ENCODE measurements at regions of chr10 and their contacts with region 1.

Region 1: DNA sequence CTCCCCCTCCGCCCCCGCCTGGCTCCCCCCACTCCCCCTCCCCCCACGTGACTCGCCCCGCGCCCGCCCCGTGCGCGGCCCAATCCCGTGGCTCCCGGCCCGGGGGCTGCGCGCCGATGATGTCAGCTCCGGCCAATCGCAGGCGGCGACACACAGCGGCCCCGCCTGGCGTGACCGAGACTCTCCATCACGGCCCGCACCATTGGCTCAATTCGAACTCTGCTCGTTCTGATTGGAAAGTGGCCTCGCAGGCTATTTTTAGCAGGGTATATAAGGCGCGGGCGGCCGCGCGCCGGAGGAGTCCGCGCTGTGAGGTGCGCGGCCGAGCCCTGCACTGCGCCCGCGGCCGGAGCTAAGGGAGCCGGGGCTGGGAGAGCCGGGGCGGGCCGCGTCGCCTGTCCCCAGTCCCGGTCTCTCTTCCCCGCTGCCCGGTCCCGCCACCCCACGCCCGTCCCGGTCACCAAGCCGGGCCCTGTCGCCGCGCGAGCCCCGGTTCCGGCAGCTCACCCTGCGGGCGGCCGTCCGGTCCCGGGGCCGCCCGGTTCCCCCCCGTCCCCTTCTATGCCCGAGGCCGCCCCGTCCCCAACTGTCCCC is 345 bp upstream of the KLF6 start:
- DNase-seq: peak; percentile 85 to 98
- H3K4me3 ChIP-seq: peak overlapping the region; percentile 85
- H3K27ac ChIP-seq: peak overlapping the region; percentile 92
- H3K4me1 ChIP-seq: peaks cover 26% of the 10 kb centered on the region
- H3K27me3 ChIP-seq: no peaks in the 10 kb centered on the region
- CTCF ChIP-seq: no peak

Region 2: DNA sequence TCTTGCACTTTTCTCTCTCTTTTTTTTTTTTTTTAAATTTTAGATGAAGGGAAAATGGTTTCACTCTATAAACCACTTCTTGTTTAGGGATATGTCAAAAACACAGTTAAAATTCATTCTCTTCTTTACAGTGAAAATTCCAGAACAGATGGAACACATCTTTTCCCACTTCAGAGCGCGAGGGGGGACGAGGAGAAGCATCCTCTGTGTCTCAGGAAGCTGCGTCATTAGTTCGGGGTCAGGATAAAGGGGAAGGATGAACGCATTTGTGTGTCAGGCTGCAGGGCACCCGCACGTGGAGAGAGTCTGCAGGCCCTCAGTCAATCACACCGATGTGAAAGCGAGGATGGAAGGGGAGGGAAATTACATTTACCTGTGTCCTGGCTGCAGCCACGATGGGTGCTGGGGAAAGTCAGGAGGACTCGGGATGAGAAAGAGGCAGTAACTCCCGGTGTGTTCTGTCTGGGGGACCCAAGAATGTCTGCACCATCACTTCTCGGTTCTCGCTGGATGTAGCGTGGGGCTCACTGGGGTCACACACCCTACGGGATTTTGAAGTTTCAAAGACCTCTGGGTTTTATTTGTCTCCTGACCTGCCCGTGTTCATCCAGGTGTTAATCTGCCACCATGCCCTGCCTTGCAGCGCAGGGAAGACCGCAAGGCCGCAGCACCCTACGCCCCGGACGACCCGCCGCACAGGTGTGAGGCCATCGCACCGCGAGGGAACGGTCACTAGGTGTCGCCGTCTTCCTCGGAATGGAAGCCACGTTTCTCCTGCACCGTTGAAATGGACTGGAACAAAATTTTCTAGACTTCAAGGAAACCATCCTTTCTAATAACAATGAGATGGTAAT is 546.1 kb before region 1 on chr10:
- CTCF ChIA-PET with region 1: no interaction called
- POLR2A ChIA-PET with region 1: no interaction called
- intact Hi-C with region 1: loop called (anchors 2 kb)
- DNase-seq: peak in 1 of 2 experiments; percentile 79
- H3K4me3 ChIP-seq: no peak overlapping the region
- H3K27ac ChIP-seq: no peak overlapping the region
- H3K4me1 ChIP-seq: no peaks in the 10 kb centered on the region
- H3K27me3 ChIP-seq: no peaks in the 10 kb centered on the region
- CTCF ChIP-seq: peak; percentile 67

Region 3: GRCh38 chr10:3623746-3624145 is 161.6 kb before region 1 on chr10:
- CTCF ChIA-PET with region 1: no interaction called
- POLR2A ChIA-PET with region 1: no interaction called
- intact Hi-C with region 1: loop called (anchors 1 kb)
- DNase-seq: peak; percentile 55 to 92
- H3K4me3 ChIP-seq: peak overlapping the region; percentile 49; the same call in 1 of the 2 replicates
- H3K27ac ChIP-seq: peak overlapping the region; percentile 100
- H3K4me1 ChIP-seq: peaks cover 48% of the 10 kb centered on the region
- H3K27me3 ChIP-seq: no peaks in the 10 kb centered on the region
- CTCF ChIP-seq: no peak

Region 4: DNA sequence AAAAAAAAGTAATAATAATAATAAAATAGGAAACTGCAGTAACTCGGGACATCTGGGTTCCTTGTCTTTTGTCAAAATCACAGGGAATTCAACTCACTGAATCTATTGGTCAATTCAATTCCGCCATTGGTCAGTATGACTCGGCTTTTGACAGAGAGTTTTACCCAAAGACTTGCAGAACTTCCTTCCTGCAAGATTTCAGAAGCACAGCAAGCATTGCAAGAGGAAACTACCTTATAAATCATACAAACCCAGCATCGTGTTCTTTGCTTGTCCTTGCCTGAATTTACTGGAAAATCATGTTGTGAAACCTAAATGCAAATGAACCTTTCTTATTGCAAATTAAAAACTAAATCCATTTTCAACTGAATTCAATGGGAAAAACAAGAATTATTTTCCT is 15.8 kb before region 1 on chr10:
- CTCF ChIA-PET with region 1: no interaction called
- POLR2A ChIA-PET with region 1: no interaction called
- intact Hi-C with region 1: no loop called
- DNase-seq: no peak
- H3K4me3 ChIP-seq: no peak overlapping the region
- H3K27ac ChIP-seq: no peak overlapping the region
- H3K4me1 ChIP-seq: peaks cover 25% of the 10 kb centered on the region
- H3K27me3 ChIP-seq: no peaks in the 10 kb centered on the region
- CTCF ChIP-seq: no peak

Region 5: GRCh38 chr10:3797750-3798149 is 12.4 kb after region 1 on chr10:
- CTCF ChIA-PET with region 1: no interaction called
- POLR2A ChIA-PET with region 1: interaction called, 12 read pairs
- intact Hi-C with region 1: no loop called
- DNase-seq: no peak
- H3K4me3 ChIP-seq: no peak overlapping the region
- H3K27ac ChIP-seq: no peak overlapping the region
- H3K4me1 ChIP-seq: no peaks in the 10 kb centered on the region
- H3K27me3 ChIP-seq: no peaks in the 10 kb centered on the region
- CTCF ChIP-seq: no peak

Region 6: GRCh38 chr10:3887885-3888476 is 102.6 kb after region 1 on chr10:
- CTCF ChIA-PET with region 1: no interaction called
- POLR2A ChIA-PET with region 1: interaction called, 5 read pairs
- intact Hi-C with region 1: loop called (anchors 2 kb)
- DNase-seq: peak; percentile 50 to 89
- H3K4me3 ChIP-seq: no peak overlapping the region
- H3K27ac ChIP-seq: peak overlapping the region; percentile 90
- H3K4me1 ChIP-seq: peaks cover 41% of the 10 kb centered on the region
- H3K27me3 ChIP-seq: no peaks in the 10 kb centered on the region
- CTCF ChIP-seq: no peak

Region 7: GRCh38 chr10:4656576-4657182 is 871.3 kb after region 1 on chr10:
- CTCF ChIA-PET with region 1: no interaction called
- POLR2A ChIA-PET with region 1: no interaction called
- intact Hi-C with region 1: loop called (anchors 2 kb)
- DNase-seq: peak; percentile 30 to 41
- H3K4me3 ChIP-seq: no peak overlapping the region
- H3K27ac ChIP-seq: no peak overlapping the region
- H3K4me1 ChIP-seq: no peaks in the 10 kb centered on the region
- H3K27me3 ChIP-seq: no peaks in the 10 kb centered on the region
- CTCF ChIP-seq: peak; percentile 75

Measured in PC-9 (cell line).